ENCODE measurements at regions of chr3 and their contacts with region 1.

Region 1: GRCh38 chr3:39189959-39190269 is 2.5 kb downstream of the XIRP1 start:
- DNase-seq: peak; percentile 56 to 75
- H3K4me3 ChIP-seq: no peak overlapping the region
- H3K4me1 ChIP-seq: no peaks in the 10 kb centered on the region
- H3K27me3 ChIP-seq: no peaks in the 10 kb centered on the region

Region 2: GRCh38 chr3:39249453-39250115 is 59.7 kb after region 1 on chr3:
- in situ Hi-C with region 1: no loop called
- DNase-seq: no peak
- H3K4me3 ChIP-seq: no peak overlapping the region
- H3K4me1 ChIP-seq: no peaks in the 10 kb centered on the region
- H3K27me3 ChIP-seq: no peaks in the 10 kb centered on the region

Region 3: DNA sequence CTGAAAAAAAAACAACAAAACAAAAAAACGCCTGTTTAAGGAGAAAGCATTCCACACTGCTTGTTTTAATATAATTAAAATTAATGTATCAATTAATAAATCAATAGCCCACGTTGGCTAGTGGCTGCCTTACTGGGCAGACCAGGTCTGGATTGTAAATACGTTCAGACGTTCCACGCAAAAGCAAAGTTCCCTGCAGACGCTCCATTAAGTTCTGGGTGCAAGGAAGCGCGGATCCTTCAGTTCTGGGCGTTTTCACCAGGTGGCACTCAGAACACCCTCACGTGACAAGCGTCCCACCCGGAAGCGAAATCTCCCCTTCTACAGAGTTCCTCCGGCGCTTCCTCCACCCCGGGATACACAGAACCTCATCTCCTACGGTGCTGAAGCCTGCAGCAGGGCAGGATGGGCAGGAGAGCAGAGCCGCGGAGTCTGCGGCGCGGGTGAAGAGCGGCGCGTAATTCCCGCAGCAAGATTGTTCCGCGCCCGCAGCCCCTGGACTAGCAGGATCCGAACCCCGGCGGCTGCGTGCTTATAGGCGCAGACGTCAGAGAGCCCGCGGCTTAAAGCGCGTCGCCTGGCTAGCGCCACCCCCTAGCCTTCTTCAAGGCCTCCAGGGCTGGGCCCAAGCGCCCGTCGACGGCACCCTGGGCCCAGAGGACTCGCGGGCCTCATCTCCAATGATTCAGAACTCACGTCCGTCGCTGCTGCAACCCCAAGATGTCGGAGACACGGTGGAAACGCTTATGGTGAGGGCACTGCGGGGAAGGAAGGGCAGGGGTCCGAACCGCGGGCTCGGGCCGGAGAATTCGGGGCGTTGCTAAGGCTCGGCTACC is 193.3 kb after region 1 on chr3 and contains the start of gene SLC25A38:
- in situ Hi-C with region 1: loop called (anchors 5 kb)
- DNase-seq: peak; percentile 88 to 92
- H3K4me3 ChIP-seq: peak within 1 kb of the TSS; percentile 93
- H3K4me1 ChIP-seq: peaks cover 15% of the 10 kb centered on the region
- H3K27me3 ChIP-seq: no peaks in the 10 kb centered on the region

Region 4: GRCh38 chr3:39531650-39532049 is 341.7 kb after region 1 on chr3:
- in situ Hi-C with region 1: no loop called
- DNase-seq: no peak
- H3K4me3 ChIP-seq: no peak overlapping the region
- H3K4me1 ChIP-seq: no peaks in the 10 kb centered on the region; the same call in 1 of the 2 replicates
- H3K27me3 ChIP-seq: peaks cover 4% of the 10 kb centered on the region; the same call in 1 of the 2 replicates

Region 5: DNA sequence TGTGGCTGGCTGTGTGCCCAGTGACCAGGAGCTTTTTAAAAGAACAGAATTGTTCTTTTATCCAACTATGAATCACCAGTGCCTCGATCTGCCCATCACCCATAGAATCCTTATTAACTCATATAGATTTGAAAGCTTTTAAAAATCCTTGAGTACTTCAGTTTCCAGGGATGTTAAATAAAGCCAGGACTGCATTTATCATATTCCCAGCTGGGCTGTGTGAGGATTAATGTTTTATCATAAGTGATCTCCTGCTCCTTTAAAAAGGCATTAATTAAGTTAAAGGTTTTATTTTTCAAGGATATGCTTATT is 853.5 kb after region 1 on chr3:
- in situ Hi-C with region 1: no loop called
- DNase-seq: peak; percentile 45 to 69
- H3K4me3 ChIP-seq: no peak overlapping the region
- H3K4me1 ChIP-seq: peaks cover 4% of the 10 kb centered on the region; the same call in 1 of the 2 replicates
- H3K27me3 ChIP-seq: no peaks in the 10 kb centered on the region

Measured in HAP-1 (cell line).